A673 (cell line): ENCODE measurements at regions of chr7 and their contacts with region 1.

Region 1: DNA sequence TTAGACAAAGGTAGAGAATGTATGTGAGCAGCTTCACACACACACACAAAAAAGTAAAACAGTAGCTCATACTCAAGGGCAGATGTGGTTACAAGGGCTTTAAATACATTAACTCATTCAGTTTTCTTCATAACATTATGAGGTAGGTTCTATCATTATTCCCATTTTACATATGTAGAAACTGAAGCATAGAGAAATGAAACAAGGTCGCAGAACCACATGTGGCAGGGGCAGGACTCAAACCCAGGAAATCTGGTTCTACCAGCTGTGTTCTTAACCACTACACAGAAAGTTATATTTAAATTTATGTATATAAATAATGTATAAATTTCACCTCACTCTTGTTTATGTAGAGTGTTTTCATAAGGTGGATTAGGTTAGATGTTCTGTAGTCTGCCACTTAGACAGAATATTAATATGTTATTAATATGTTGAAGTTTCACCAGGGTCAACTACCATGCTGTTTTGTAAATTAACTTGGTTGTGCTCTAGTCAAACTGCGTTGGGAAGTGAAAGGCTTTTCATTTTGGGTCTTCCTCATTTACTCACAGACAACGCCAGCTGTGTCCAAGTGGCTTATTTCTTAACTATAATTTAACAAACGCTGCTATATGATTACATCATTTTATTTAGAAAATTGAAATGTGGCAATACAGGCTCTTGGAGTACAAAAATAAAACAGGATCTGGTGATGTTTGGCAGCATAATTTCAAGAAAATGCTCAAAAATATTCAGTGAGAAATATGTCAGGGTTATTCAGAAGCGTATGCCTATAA is 138.4 kb downstream of the MDFIC start:
- DNase-seq: no peak
- H3K4me3 ChIP-seq: no peak overlapping the region
- H3K27ac ChIP-seq: no peak overlapping the region
- H3K4me1 ChIP-seq: no peaks in the 10 kb centered on the region
- H3K27me3 ChIP-seq: no peaks in the 10 kb centered on the region
- CTCF ChIP-seq: no peak

Region 2: DNA sequence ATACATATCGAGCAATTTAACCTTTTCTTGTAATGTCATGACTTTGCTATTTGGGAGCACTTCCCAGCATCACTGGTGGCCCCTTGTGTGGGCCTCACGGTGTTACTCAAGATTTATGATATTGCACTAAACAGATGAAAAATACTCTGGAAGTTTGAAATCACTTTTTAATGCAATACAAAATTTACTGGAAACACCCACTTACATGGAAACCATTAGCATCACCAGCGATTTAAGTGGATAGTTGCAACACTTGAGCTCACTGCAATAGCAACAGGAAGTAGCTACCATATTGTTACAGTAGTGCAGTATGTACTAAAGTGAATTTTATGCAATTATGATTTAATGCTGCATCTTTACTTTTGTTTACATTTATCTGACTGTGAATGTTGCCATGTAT is 46.0 kb after region 1 on chr7:
- CTCF ChIA-PET with region 1: no interaction called
- POLR2A ChIA-PET with region 1: interaction called, 10 read pairs
- intact Hi-C with region 1: no loop called
- DNase-seq: no peak
- H3K4me3 ChIP-seq: no peak overlapping the region
- H3K27ac ChIP-seq: no peak overlapping the region
- H3K4me1 ChIP-seq: no peaks in the 10 kb centered on the region
- H3K27me3 ChIP-seq: no peaks in the 10 kb centered on the region
- CTCF ChIP-seq: no peak

Region 3: GRCh38 chr7:115240242-115240641 is 180.0 kb after region 1 on chr7:
- CTCF ChIA-PET with region 1: no interaction called
- POLR2A ChIA-PET with region 1: no interaction called
- intact Hi-C with region 1: no loop called
- DNase-seq: no peak
- H3K4me3 ChIP-seq: no peak overlapping the region
- H3K27ac ChIP-seq: no peak overlapping the region
- H3K4me1 ChIP-seq: no peaks in the 10 kb centered on the region
- H3K27me3 ChIP-seq: no peaks in the 10 kb centered on the region
- CTCF ChIP-seq: no peak